Left lung (tissue), 14 donors: ENCODE measurements at regions of chr9 and their contacts with region 1.

Region 1: GRCh38 chr9:80635065-80635464 is 1054.3 kb downstream of the TLE1 start:
- DNase-seq: no peak
- ATAC-seq: no peak
- H3K4me3 ChIP-seq: no peak overlapping the region
- H3K27ac ChIP-seq: no peak overlapping the region
- H3K4me1 ChIP-seq: no peaks in the 10 kb centered on the region
- H3K27me3 ChIP-seq: no peaks in the 10 kb centered on the region
- CTCF ChIP-seq: no peak

Region 2: GRCh38 chr9:80522465-80522864 is 112.6 kb before region 1 on chr9:
- intact Hi-C with region 1: loop called in 1 of 2 experiments (anchors 5 kb)
- DNase-seq: no peak
- ATAC-seq: no peak
- H3K4me3 ChIP-seq: no peak overlapping the region
- H3K27ac ChIP-seq: no peak overlapping the region
- H3K4me1 ChIP-seq: no peaks in the 10 kb centered on the region
- H3K27me3 ChIP-seq: no peaks in the 10 kb centered on the region
- CTCF ChIP-seq: no peak